GM12878 (cell line): ENCODE measurements at regions of chr6 and their contacts with region 1.

Region 1: GRCh38 chr6:11653028-11653583 is 115.6 kb downstream of the TMEM170B start:
- DNase-seq: no peak
- ATAC-seq: peak; percentile 80
- H3K4me3 ChIP-seq: no peak overlapping the region
- H3K27ac ChIP-seq: no peak overlapping the region
- H3K4me1 ChIP-seq: peaks cover 17% of the 10 kb centered on the region
- H3K27me3 ChIP-seq: no peaks in the 10 kb centered on the region
- CTCF ChIP-seq: no peak
- EP300 ChIP-seq: no peak
- POLR2A ChIP-seq: no peak
- RAD21 ChIP-seq: no peak

Region 2: DNA sequence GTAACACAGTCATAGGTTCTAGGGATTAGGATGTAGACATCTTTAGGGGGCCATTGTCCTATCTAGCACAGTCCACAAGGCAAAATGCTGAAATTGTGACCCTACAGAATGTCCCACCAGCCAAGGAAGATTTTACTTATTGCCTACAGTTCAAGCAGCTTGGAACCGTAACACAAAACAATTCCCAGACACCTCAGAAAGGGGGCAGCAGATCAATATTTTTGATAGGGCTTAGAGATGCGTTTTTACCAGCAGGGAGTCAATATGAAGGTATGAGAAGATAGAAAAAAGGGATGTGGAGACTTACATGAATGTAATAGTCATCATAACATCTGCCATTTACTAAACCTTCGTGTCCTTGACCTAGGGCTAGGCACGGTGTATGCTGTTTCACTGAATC is 34.6 kb before region 1 on chr6:
- CTCF ChIA-PET with region 1: interaction called, 14 read pairs
- POLR2A ChIA-PET with region 1: no interaction called
- RAD21 ChIA-PET with region 1: interaction called, 32 read pairs
- SMC1A ChIA-PET with region 1: interaction called, 20 read pairs
- in situ Hi-C with region 1: no loop called
- intact Hi-C with region 1: no loop called
- DNase-seq: peak; percentile 13
- ATAC-seq: peak; percentile 92
- H3K4me3 ChIP-seq: no peak overlapping the region
- H3K27ac ChIP-seq: no peak overlapping the region
- H3K4me1 ChIP-seq: no peaks in the 10 kb centered on the region
- H3K27me3 ChIP-seq: no peaks in the 10 kb centered on the region
- CTCF ChIP-seq: peak; percentile 36 to 53 (median 51)
- EP300 ChIP-seq: no peak
- POLR2A ChIP-seq: no peak
- RAD21 ChIP-seq: peak; percentile 67; the same call in 1 of the 2 replicates

Region 3: GRCh38 chr6:11711003-11711983 is 58.2 kb after region 1 on chr6:
- CTCF ChIA-PET with region 1: interaction called, 3 read pairs
- POLR2A ChIA-PET with region 1: interaction called, 6 read pairs
- RAD21 ChIA-PET with region 1: interaction called, 5 read pairs
- SMC1A ChIA-PET with region 1: interaction called, 13 read pairs
- in situ Hi-C with region 1: no loop called
- intact Hi-C with region 1: no loop called
- DNase-seq: peak; percentile 67
- ATAC-seq: peak; percentile 62
- H3K4me3 ChIP-seq: peak overlapping the region; percentile 17; the same call in 1 of the 2 replicates
- H3K27ac ChIP-seq: peak overlapping the region; percentile 75
- H3K4me1 ChIP-seq: peaks cover 45% of the 10 kb centered on the region
- H3K27me3 ChIP-seq: no peaks in the 10 kb centered on the region
- CTCF ChIP-seq: no peak
- EP300 ChIP-seq: peak; percentile 73 to 78; a peak in 2 of 4 replicates
- POLR2A ChIP-seq: 0 out of 2 replicates have a peak, but pooled peaks have one; percentile 32
- RAD21 ChIP-seq: peak; percentile 15; the same call in 1 of the 2 replicates

Region 4: GRCh38 chr6:11975353-11975977 is 322.4 kb after region 1 on chr6:
- CTCF ChIA-PET with region 1: no interaction called
- POLR2A ChIA-PET with region 1: no interaction called
- RAD21 ChIA-PET with region 1: no interaction called
- SMC1A ChIA-PET with region 1: no interaction called
- in situ Hi-C with region 1: no loop called
- intact Hi-C with region 1: no loop called
- DNase-seq: peak; percentile 62
- ATAC-seq: peak; percentile 89
- H3K4me3 ChIP-seq: no peak overlapping the region
- H3K27ac ChIP-seq: peak overlapping the region; percentile 68
- H3K4me1 ChIP-seq: peaks cover 15% of the 10 kb centered on the region
- H3K27me3 ChIP-seq: no peaks in the 10 kb centered on the region
- CTCF ChIP-seq: no peak
- EP300 ChIP-seq: no peak
- POLR2A ChIP-seq: peak; percentile 46; the same call in 1 of the 2 replicates
- RAD21 ChIP-seq: no peak

Region 5: GRCh38 chr6:12060780-12061619 is 407.9 kb after region 1 on chr6:
- CTCF ChIA-PET with region 1: no interaction called
- POLR2A ChIA-PET with region 1: no interaction called
- RAD21 ChIA-PET with region 1: interaction called, 7 read pairs
- SMC1A ChIA-PET with region 1: interaction called, 16 read pairs
- in situ Hi-C with region 1: no loop called
- intact Hi-C with region 1: no loop called
- DNase-seq: peak; percentile 87
- ATAC-seq: peak; percentile 82
- H3K4me3 ChIP-seq: peak overlapping the region; percentile 57; the same call in 1 of the 2 replicates
- H3K27ac ChIP-seq: peak overlapping the region; percentile 85
- H3K4me1 ChIP-seq: peaks cover 44% of the 10 kb centered on the region
- H3K27me3 ChIP-seq: no peaks in the 10 kb centered on the region
- CTCF ChIP-seq: no peak
- EP300 ChIP-seq: peak; percentile 94
- POLR2A ChIP-seq: peak; percentile 70
- RAD21 ChIP-seq: no peak

Region 6: DNA sequence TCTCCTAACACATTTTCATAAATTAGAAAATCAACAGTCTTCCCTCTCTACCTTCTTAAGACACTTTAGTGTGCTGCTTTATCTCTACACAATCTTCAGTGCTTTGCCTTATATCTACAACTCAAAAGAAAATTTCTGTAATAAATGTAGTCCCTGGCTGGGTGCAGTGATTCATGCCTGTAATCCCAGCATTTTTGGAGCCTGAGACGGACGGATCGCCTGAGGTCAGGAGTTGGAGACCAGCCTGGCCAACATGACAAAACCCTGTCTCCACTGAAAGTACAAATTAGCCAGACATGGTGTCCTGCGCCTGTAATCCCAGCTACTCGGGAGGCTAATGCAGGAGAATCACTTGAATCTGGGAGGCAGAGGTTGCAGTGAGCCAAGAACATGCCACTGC is 627.4 kb after region 1 on chr6:
- CTCF ChIA-PET with region 1: interaction called, 205 read pairs
- POLR2A ChIA-PET with region 1: no interaction called
- RAD21 ChIA-PET with region 1: interaction called, 23 read pairs
- SMC1A ChIA-PET with region 1: interaction called, 9 read pairs
- in situ Hi-C with region 1: no loop called
- intact Hi-C with region 1: no loop called
- DNase-seq: no peak
- ATAC-seq: no peak
- H3K4me3 ChIP-seq: no peak overlapping the region
- H3K27ac ChIP-seq: no peak overlapping the region
- H3K4me1 ChIP-seq: peaks cover 4% of the 10 kb centered on the region; the same call in 1 of the 2 replicates
- H3K27me3 ChIP-seq: no peaks in the 10 kb centered on the region
- CTCF ChIP-seq: no peak
- EP300 ChIP-seq: no peak
- POLR2A ChIP-seq: no peak
- RAD21 ChIP-seq: no peak